ENCODE measurements at regions of chr10 and their contacts with region 1.

Region 1: DNA sequence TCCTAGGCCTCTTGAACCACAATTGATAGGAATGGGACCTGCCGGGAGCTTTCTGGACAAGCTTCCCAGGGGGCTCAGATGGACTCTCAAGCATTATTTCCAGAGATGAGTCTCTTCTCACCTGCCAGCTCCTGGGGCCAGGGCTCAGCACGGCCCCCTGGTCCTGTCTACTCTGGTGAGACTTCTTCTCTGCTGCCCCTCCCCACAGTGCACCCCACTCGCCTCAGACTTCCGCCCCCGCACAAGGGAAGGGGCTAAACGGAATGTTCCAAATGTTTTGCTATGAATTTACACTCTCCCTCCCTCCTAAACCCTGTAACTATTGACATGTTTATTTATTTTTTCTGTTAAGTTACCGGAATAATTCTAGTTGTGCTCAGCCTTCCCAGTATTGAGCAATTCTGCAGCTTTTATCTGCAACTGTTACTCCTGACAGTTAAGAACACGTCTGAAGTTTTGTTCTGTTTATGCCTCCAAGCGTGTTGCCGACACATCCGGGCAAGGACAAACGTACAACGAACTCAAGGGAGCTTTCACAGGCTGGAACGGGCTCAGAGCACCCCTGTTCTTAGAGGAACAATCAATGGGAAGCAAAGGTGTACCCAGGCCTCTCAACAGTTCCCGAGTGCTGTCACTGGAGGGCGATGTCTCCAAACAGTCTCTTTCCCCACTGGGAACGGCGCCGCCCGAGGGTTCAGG is 55.2 kb downstream of the FHIP2A start:
- DNase-seq: peak; percentile 86
- ATAC-seq: peak; percentile 71
- H3K4me3 Mint-ChIP-seq: no peak overlapping the region; the same call in 1 of the 2 replicates
- H3K27ac Mint-ChIP-seq: peak overlapping the region; percentile 41; the same call in 1 of the 2 replicates
- H3K4me1 Mint-ChIP-seq: peaks cover 43% of the 10 kb centered on the region
- H3K27me3 Mint-ChIP-seq: no peaks in the 10 kb centered on the region; the same call in 1 of the 2 replicates
- CTCF ChIP-seq: peak; percentile 36; the same call in 1 of the 2 replicates

Region 2: DNA sequence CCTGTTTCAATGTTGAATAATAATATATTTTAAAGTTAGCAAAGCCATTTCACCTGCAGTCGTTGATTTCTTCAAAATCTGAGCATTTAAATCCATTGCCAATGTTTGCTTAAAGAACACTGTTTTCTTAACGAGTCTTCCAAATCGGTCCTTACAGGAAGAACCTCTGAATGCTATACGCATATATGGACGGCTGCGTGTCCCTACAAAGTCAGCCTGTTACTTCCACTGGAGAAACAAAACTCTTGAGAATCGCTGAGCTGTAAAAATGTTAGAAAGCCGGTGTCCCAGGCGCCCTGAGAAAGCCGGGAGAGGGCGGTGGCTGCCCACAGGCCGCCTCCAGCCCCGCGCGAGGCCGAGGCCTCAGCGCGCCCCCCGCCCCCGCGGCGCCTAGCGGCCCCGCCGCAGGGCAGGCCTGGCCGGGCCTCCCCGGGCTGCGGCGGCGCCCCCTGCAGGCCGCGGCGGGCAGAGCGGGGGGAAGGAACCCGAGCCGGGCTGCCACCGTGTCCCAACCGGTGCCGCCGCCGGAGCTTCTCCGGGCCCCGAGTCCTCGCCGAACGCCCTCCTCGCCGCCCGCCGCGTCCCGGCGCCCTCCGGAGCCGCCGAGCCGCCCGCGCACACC is 55.3 kb before region 1 on chr10 and contains the start of gene FHIP2A:
- CTCF ChIA-PET with region 1: interaction called, 21 read pairs
- POLR2A ChIA-PET with region 1: no interaction called
- DNase-seq: peak; percentile 82
- ATAC-seq: peak; percentile 95
- H3K4me3 Mint-ChIP-seq: peak within 1 kb of the TSS; percentile 88
- H3K27ac Mint-ChIP-seq: peak within 1 kb of the TSS; percentile 82
- H3K4me1 Mint-ChIP-seq: peaks cover 10% of the 10 kb centered on the region
- H3K27me3 Mint-ChIP-seq: no peaks in the 10 kb centered on the region
- CTCF ChIP-seq: peak; percentile 63
- total RNA-seq, gene FHIP2A: 14.3 to 15.5 TPM (median 14.6 TPM) in 3 replicates

Region 3: DNA sequence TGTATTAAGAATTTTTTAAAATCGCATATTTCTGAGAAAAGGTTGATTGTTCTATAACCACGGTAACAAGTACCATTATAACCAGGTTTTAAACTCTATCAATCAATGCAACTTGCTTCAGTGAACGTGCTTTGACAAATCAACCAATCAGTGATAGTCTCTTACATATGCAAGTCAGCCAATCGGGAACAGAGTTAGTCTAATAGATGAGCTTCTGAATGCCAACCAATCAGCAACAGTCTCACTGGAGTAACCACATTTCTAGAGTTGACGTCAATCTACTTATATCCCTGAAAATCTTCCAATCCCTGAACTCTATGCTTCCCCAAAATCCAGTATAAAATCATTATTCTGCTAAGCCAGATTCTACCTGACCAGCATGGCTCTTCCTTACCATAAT is 16.5 kb after region 1 on chr10:
- CTCF ChIA-PET with region 1: interaction called, 12 read pairs
- POLR2A ChIA-PET with region 1: no interaction called
- DNase-seq: no peak
- ATAC-seq: 0 out of 2 replicates have a peak, but pooled peaks have one; percentile 20
- H3K4me3 Mint-ChIP-seq: no peak overlapping the region
- H3K27ac Mint-ChIP-seq: no peak overlapping the region
- H3K4me1 Mint-ChIP-seq: peaks cover 15% of the 10 kb centered on the region
- H3K27me3 Mint-ChIP-seq: no peaks in the 10 kb centered on the region
- CTCF ChIP-seq: no peak

Region 4: DNA sequence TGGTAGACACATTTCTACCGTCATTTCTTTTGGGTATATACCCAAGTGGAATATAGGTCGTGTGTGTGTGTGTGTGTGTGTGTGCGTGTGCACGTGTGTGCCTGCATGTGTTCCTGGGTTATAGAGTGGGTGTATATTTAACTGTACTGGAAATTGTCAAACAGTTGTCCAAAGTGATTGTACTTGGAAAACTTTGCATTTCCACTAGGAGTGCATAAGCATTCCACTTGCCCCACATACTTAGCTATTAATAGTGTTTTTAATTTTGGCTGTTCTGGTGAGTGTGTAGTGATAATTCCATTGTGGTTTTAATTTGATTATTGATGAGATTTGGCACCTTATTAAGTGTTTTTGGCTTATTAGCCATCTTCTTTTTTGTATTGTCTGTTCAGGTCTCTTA is 87.2 kb after region 1 on chr10:
- CTCF ChIA-PET with region 1: no interaction called
- POLR2A ChIA-PET with region 1: no interaction called
- DNase-seq: no peak
- ATAC-seq: no peak
- H3K4me3 Mint-ChIP-seq: no peak overlapping the region
- H3K27ac Mint-ChIP-seq: no peak overlapping the region
- H3K4me1 Mint-ChIP-seq: peaks cover 14% of the 10 kb centered on the region
- H3K27me3 Mint-ChIP-seq: no peaks in the 10 kb centered on the region
- CTCF ChIP-seq: no peak

Region 5: DNA sequence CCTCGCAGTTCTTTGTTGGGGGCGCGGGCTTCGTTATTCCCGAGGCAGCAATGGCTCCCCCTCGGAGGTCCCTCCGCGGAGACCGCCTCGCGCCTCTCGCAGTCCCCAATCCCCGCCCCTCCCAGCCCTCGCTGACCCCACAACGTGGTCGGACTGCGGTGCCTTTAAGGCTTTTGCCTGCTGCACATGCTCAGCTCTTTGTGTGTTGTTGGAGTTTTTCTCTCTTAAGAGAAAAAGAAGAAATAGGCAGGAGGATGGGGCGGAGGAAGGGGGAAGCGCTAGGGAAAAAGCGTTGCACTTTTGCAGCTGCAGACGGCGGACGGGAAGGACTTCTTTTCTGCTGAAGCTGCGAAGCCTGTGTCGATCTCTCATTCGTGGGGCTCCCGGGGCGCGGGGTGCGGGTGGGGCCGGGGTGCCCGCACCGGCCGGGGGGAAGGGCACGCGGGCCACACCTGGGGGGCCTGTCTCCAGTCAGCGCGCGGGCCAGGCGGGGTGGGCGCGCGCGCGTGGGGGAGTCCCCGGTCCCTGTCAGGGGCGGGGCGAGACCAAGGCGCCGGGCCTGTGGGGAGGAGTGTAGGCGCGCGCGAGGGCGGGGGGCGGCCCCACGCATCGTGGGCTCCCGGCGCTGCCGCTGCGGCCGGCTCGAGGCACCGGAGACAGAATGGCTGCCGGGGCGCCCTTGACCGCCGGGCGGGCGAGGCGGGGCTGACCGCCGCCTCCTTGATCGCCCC is 216.0 kb after region 1 on chr10:
- CTCF ChIA-PET with region 1: interaction called, 10 read pairs
- POLR2A ChIA-PET with region 1: interaction called, 3 read pairs
- DNase-seq: peak; percentile 69
- ATAC-seq: peak; percentile 43
- H3K4me3 Mint-ChIP-seq: peak overlapping the region; percentile 84
- H3K27ac Mint-ChIP-seq: no peak overlapping the region
- H3K4me1 Mint-ChIP-seq: peaks cover 35% of the 10 kb centered on the region
- H3K27me3 Mint-ChIP-seq: peaks cover 24% of the 10 kb centered on the region
- CTCF ChIP-seq: no peak

Region 6: GRCh38 chr10:115129752-115130151 is 253.0 kb after region 1 on chr10:
- CTCF ChIA-PET with region 1: interaction called, 32 read pairs
- POLR2A ChIA-PET with region 1: no interaction called
- DNase-seq: no peak
- ATAC-seq: no peak
- H3K4me3 Mint-ChIP-seq: no peak overlapping the region
- H3K27ac Mint-ChIP-seq: no peak overlapping the region
- H3K4me1 Mint-ChIP-seq: no peaks in the 10 kb centered on the region
- H3K27me3 Mint-ChIP-seq: no peaks in the 10 kb centered on the region
- CTCF ChIP-seq: no peak; the same call in 1 of the 2 replicates